Activated naive CD4-positive, alpha-beta T cell treated with anti-CD3 and anti-CD28 coated beads for 36 hours (primary cell): ENCODE measurements at regions of chr1 and their contacts with region 1.

Region 1: DNA sequence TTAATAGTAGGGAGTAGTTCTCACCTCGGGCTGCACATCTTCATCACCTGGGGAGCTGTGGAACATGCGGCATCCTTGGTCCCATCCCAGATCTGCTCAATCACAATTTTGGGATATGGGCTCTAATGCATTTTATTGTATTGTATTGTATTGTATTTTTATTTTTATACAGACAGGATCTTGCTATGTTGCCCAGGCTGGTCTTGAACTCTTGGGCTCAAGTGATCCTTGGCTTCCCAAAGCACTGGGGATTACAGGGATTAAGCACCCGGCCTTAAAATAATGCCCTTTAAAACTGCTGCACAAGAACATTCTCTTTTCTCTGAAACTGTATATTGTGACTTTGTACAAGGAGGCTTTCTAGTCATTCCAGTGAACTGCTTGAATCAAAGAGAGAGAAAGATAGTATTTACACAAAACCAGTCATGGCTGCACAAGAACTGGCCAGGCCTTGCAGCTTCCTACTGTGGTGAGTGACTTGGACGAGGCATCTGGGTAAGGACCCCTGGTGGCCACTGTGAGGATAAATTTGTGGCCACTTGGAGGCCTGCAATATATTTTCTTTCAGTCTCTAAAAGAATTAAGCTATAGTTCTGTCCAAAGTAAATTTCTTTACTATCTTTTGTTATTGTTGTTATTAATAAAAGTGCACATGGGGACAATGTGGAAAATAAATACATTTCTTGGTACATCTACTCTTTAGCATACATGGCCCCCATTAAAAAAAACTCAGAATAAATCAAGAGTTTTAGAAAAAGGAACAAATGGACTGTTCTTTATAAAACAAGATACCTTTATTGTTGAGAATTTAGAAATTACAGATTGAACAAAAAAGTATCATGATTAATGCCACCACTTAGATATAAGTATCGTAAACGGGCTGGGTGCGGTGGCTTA is 48.0 kb downstream of the TBCE start:
- DNase-seq: peak; percentile 76
- H3K4me3 Mint-ChIP-seq: no peak overlapping the region
- H3K27ac Mint-ChIP-seq: no peak overlapping the region
- H3K4me1 Mint-ChIP-seq: peaks cover 4% of the 10 kb centered on the region
- H3K27me3 Mint-ChIP-seq: no peaks in the 10 kb centered on the region

Region 2: GRCh38 chr1:234978397-234979295 is 436.6 kb before region 1 on chr1:
- CTCF ChIA-PET with region 1: no interaction called
- intact Hi-C with region 1: no loop called
- DNase-seq: peak; percentile 81
- H3K4me3 Mint-ChIP-seq: peak overlapping the region; percentile 79
- H3K27ac Mint-ChIP-seq: peak overlapping the region; percentile 97
- H3K4me1 Mint-ChIP-seq: peaks cover 59% of the 10 kb centered on the region
- H3K27me3 Mint-ChIP-seq: no peaks in the 10 kb centered on the region

Region 3: DNA sequence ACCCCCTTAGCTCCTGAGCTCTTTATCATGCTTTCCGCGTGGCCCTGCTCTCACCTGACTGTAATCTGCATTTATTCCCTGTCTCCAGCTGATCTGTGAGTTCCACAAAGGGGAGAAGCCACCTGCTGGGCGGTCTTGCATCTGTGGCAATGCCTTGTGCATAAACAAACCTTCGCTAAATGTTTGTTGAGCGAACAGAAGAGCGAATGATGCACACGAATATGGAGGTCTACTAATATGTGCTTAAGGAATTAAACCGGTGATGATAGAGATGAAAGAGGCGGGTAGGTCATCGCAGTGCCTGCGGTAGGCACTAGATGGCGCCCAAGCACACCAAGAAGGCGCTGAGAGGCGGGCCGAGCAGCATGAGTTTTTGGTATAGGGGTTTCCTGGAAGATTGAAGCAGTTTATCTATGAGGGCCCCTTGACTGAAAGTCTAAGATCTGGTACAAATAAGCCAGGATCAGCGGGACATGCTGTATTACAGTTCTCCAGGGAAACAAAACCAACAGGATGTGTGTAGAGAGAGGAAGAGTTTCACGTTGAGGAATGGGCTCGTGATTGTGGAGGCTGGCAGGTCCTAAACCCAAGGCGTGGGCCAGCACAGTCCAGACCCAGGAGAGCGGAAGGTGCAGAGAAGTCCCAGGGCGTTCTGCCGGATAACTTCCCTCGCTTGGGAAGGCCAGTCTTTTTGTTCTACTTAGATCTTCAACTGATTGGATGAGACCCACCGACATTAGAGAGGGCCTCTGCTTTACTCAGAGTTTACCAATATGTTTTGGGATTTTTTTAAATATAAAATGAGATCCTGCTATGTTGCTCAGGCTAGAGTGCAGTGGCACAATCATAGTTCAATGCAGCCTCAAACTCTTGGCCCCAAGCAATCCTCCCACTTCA is 321.3 kb before region 1 on chr1:
- CTCF ChIA-PET with region 1: interaction called, 27 read pairs
- intact Hi-C with region 1: loop called (anchors 1 kb)
- DNase-seq: peak; percentile 92
- H3K4me3 Mint-ChIP-seq: no peak overlapping the region
- H3K27ac Mint-ChIP-seq: no peak overlapping the region
- H3K4me1 Mint-ChIP-seq: peaks cover 7% of the 10 kb centered on the region
- H3K27me3 Mint-ChIP-seq: peaks cover 2% of the 10 kb centered on the region

Region 4: DNA sequence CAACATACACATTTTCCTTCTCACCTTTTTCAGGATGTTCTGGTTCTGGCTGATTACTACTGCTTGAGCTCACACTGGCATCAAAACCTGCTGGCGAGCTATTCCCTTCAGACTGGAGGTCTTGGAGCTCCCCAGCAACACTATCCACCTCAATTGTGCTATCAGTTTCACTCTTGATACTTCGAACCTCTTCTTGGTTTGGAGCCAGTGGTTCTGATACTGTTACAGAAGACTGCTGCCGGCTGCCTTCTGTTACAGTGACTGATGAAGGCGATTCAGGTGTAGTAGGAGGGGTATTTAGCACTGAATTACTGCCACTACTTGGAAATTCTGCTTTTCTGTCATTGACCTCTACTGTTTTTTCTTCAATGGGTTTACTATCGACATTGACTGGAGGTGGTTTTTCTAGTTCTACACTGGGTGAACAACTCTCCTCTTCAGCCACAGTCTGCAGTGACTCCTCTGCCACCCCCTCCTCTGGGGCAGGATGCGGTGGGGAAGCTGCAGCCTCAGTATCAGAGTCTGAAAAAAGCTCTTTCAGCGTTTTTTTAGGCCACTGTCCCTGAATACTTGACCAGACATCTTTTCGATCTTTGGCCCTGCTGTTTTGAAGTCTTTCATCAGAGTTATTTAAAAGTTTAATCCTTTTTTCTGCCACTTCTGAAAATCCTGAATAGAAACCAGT is 233.6 kb before region 1 on chr1:
- CTCF ChIA-PET with region 1: interaction called, 10 read pairs
- intact Hi-C with region 1: no loop called
- DNase-seq: no peak
- H3K4me3 Mint-ChIP-seq: no peak overlapping the region
- H3K27ac Mint-ChIP-seq: peak overlapping the region; percentile 46
- H3K4me1 Mint-ChIP-seq: peaks cover 18% of the 10 kb centered on the region
- H3K27me3 Mint-ChIP-seq: no peaks in the 10 kb centered on the region

Region 5: GRCh38 chr1:235253219-235253962 is 161.9 kb before region 1 on chr1:
- CTCF ChIA-PET with region 1: interaction called, 44 read pairs
- intact Hi-C with region 1: loop called (anchors 1 kb)
- DNase-seq: peak; percentile 79
- H3K4me3 Mint-ChIP-seq: no peak overlapping the region
- H3K27ac Mint-ChIP-seq: no peak overlapping the region
- H3K4me1 Mint-ChIP-seq: peaks cover 30% of the 10 kb centered on the region
- H3K27me3 Mint-ChIP-seq: no peaks in the 10 kb centered on the region

Region 6: DNA sequence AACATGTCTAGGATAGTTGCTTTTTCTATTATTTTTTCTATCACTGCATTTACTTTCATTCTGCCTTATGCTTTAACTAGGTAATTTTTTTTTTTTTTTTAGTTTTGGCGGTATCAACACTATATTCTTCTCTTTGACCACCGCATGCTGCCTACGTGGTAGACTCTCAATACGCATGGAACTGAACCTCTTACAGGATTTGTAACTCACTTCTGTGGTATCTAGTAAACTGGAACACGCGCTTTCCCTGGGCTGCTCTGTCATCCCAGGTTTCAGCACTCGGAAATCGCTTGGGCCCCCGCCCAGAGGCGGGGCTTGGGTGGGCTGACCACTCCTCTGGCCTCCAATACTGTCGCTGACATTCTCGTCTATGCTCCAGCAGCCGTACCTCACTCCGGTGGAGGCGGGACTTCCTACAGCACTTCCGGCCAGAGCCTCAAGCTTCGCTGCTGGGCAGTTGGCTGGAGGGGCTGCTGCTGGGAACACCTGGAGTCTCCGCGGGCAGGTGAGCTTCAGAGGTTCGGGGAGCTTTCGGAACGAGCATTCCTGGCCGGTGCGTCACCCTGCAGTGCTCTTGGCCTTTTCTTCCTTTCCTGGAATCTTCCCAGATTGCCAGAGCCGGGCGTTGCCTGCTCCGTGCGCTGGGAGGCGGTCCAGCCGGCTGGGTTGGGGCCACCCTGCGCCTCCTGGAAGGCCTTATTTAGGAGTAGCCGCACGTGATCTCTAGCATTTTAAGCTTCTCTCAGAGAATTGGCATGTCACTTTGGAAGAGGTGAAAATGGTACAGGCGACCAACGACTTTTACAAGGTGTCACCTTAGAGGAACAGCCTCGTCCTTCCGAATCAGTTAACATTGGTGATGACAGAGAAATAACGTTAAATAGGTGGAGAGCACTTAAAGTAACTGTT is 48.0 kb before region 1 on chr1 and contains the start of gene TBCE:
- CTCF ChIA-PET with region 1: interaction called, 11 read pairs
- intact Hi-C with region 1: loop called (anchors 2 kb)
- DNase-seq: peak; percentile 92
- H3K4me3 Mint-ChIP-seq: peak within 1 kb of the TSS; percentile 96
- H3K27ac Mint-ChIP-seq: peak within 1 kb of the TSS; percentile 90
- H3K4me1 Mint-ChIP-seq: peaks cover 27% of the 10 kb centered on the region
- H3K27me3 Mint-ChIP-seq: no peaks in the 10 kb centered on the region
- total RNA-seq, gene TBCE: 18.8 to 22.1 TPM

Region 7: GRCh38 chr1:235614442-235614954 is 199.2 kb after region 1 on chr1:
- CTCF ChIA-PET with region 1: no interaction called
- intact Hi-C with region 1: no loop called
- DNase-seq: no peak
- H3K4me3 Mint-ChIP-seq: no peak overlapping the region
- H3K27ac Mint-ChIP-seq: no peak overlapping the region
- H3K4me1 Mint-ChIP-seq: no peaks in the 10 kb centered on the region
- H3K27me3 Mint-ChIP-seq: no peaks in the 10 kb centered on the region